MCF 10A (cell line): ENCODE measurements at regions of chr3 and their contacts with region 1.

Region 1: GRCh38 chr3:63349583-63350521 is 71.7 kb downstream of the SYNPR start:
- DNase-seq: peak; percentile 70
- H3K4me3 Mint-ChIP-seq: no peak overlapping the region
- H3K27ac Mint-ChIP-seq: no peak overlapping the region
- H3K4me1 Mint-ChIP-seq: no peaks in the 10 kb centered on the region
- H3K27me3 Mint-ChIP-seq: peaks cover 72% of the 10 kb centered on the region
- CTCF ChIP-seq: peak; percentile 50

Region 2: GRCh38 chr3:61541694-61542093 is 1808.2 kb before region 1 on chr3:
- CTCF ChIA-PET with region 1: no interaction called
- POLR2A ChIA-PET with region 1: no interaction called
- intact Hi-C with region 1: no loop called
- DNase-seq: no peak
- H3K4me3 Mint-ChIP-seq: no peak overlapping the region
- H3K27ac Mint-ChIP-seq: no peak overlapping the region
- H3K4me1 Mint-ChIP-seq: no peaks in the 10 kb centered on the region
- H3K27me3 Mint-ChIP-seq: no peaks in the 10 kb centered on the region
- CTCF ChIP-seq: no peak

Region 3: DNA sequence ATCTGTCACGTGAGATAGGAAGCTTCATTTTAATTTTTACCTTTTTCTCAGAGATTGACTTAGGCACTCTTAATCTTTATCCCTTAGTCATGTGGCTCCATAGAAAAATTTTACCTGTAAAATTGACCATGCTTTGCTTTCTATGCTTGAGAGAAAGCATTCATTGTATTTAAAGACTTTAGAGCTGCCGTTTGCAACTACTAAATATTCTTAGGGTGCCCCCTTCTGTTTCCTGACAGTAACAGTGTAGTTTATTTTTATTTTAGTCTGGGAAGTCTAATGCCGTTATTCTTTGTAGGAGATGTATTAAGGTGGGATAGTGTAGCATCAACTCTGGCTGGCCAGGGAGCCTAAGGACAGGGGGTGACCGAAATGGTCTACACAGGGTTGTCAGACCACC is 156.2 kb before region 1 on chr3:
- CTCF ChIA-PET with region 1: no interaction called
- POLR2A ChIA-PET with region 1: no interaction called
- intact Hi-C with region 1: no loop called
- DNase-seq: peak; percentile 26
- H3K4me3 Mint-ChIP-seq: no peak overlapping the region
- H3K27ac Mint-ChIP-seq: no peak overlapping the region
- H3K4me1 Mint-ChIP-seq: no peaks in the 10 kb centered on the region
- H3K27me3 Mint-ChIP-seq: peaks cover 64% of the 10 kb centered on the region
- CTCF ChIP-seq: peak; percentile 52

Region 4: GRCh38 chr3:63333842-63334241 is 16.0 kb before region 1 on chr3:
- CTCF ChIA-PET with region 1: interaction called, 16 read pairs
- POLR2A ChIA-PET with region 1: no interaction called
- intact Hi-C with region 1: no loop called
- DNase-seq: peak; percentile 16
- H3K4me3 Mint-ChIP-seq: no peak overlapping the region
- H3K27ac Mint-ChIP-seq: no peak overlapping the region
- H3K4me1 Mint-ChIP-seq: no peaks in the 10 kb centered on the region
- H3K27me3 Mint-ChIP-seq: peaks cover 70% of the 10 kb centered on the region
- CTCF ChIP-seq: peak; percentile 23

Region 5: GRCh38 chr3:63400246-63400860 is 50.5 kb after region 1 on chr3:
- CTCF ChIA-PET with region 1: interaction called, 8 read pairs
- POLR2A ChIA-PET with region 1: no interaction called
- intact Hi-C with region 1: loop called (anchors 1 kb)
- DNase-seq: peak; percentile 48
- H3K4me3 Mint-ChIP-seq: no peak overlapping the region
- H3K27ac Mint-ChIP-seq: no peak overlapping the region
- H3K4me1 Mint-ChIP-seq: peaks cover 1% of the 10 kb centered on the region
- H3K27me3 Mint-ChIP-seq: peaks cover 30% of the 10 kb centered on the region
- CTCF ChIP-seq: no peak

Region 6: GRCh38 chr3:63661248-63661647 is 311.4 kb after region 1 on chr3:
- CTCF ChIA-PET with region 1: interaction called, 19 read pairs
- POLR2A ChIA-PET with region 1: no interaction called
- intact Hi-C with region 1: loop called (anchors 1 kb)
- DNase-seq: peak; percentile 23
- H3K4me3 Mint-ChIP-seq: no peak overlapping the region
- H3K27ac Mint-ChIP-seq: no peak overlapping the region
- H3K4me1 Mint-ChIP-seq: no peaks in the 10 kb centered on the region
- H3K27me3 Mint-ChIP-seq: no peaks in the 10 kb centered on the region
- CTCF ChIP-seq: no peak

Region 7: DNA sequence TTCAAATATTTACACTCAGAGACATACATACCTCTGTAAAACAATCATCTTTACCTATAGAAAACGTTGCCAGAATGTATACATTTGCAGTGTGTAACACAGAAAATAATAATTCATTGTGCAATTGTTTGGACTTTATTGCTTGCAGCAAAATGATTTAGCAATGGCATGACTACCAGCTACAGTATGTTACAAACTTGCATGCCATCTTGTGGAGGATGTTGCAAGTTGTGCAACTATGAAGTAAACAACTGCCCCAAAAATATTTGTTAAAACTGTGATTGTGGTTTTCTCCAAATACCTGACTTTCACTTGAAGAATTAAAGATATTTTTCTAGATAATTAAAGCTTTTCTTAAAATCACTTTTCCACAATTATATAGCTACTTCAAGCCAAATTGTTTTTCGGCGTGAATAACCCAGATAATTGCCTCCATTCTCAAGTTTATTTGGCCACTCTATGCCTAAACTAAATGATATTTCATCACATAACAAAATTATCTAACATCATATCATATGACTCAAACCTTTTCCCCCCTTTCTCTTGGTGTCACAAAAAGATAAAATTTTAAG is 442.2 kb after region 1 on chr3:
- CTCF ChIA-PET with region 1: interaction called, 123 read pairs
- POLR2A ChIA-PET with region 1: interaction called, 3 read pairs
- intact Hi-C with region 1: loop called (anchors 1 kb)
- DNase-seq: peak; percentile 76
- H3K4me3 Mint-ChIP-seq: no peak overlapping the region
- H3K27ac Mint-ChIP-seq: no peak overlapping the region
- H3K4me1 Mint-ChIP-seq: peaks cover 9% of the 10 kb centered on the region
- H3K27me3 Mint-ChIP-seq: peaks cover 6% of the 10 kb centered on the region
- CTCF ChIP-seq: peak; percentile 63

Region 8: GRCh38 chr3:63818281-63819150 is 468.7 kb after region 1 on chr3:
- CTCF ChIA-PET with region 1: interaction called, 401 read pairs
- POLR2A ChIA-PET with region 1: interaction called, 3 read pairs
- intact Hi-C with region 1: loop called (anchors 1 kb)
- DNase-seq: peak; percentile 71
- H3K4me3 Mint-ChIP-seq: no peak overlapping the region
- H3K27ac Mint-ChIP-seq: no peak overlapping the region
- H3K4me1 Mint-ChIP-seq: peaks cover 4% of the 10 kb centered on the region
- H3K27me3 Mint-ChIP-seq: no peaks in the 10 kb centered on the region
- CTCF ChIP-seq: peak; percentile 74

Region 9: GRCh38 chr3:63993653-63994079 is 643.8 kb after region 1 on chr3:
- CTCF ChIA-PET with region 1: interaction called, 5 read pairs
- POLR2A ChIA-PET with region 1: no interaction called
- intact Hi-C with region 1: loop called (anchors 10 kb)
- DNase-seq: peak; percentile 77
- H3K4me3 Mint-ChIP-seq: no peak overlapping the region
- H3K27ac Mint-ChIP-seq: peak overlapping the region; percentile 23
- H3K4me1 Mint-ChIP-seq: no peaks in the 10 kb centered on the region
- H3K27me3 Mint-ChIP-seq: no peaks in the 10 kb centered on the region
- CTCF ChIP-seq: peak; percentile 83